ENCODE measurements at regions of chrX and their contacts with region 1.

Region 1: GRCh38 chrX:41180194-41180908 is 95.1 kb downstream of the USP9X start:
- DNase-seq: peak; percentile 32 to 65 (median 56)
- H3K4me3 ChIP-seq: no peak overlapping the region
- H3K27ac ChIP-seq: no peak overlapping the region
- H3K4me1 ChIP-seq: no peaks in the 10 kb centered on the region
- H3K27me3 ChIP-seq: no peaks in the 10 kb centered on the region
- CTCF ChIP-seq: peak; percentile 36 to 55 (median 50)
- EP300 ChIP-seq: no peak
- POLR2A ChIP-seq: no peak

Region 2: GRCh38 chrX:39288592-39288991 is 1891.8 kb before region 1 on chrX:
- intact Hi-C with region 1: loop called in 1 of 4 experiments (anchors 5 kb)
- DNase-seq: no peak
- H3K4me3 ChIP-seq: no peak overlapping the region
- H3K27ac ChIP-seq: no peak overlapping the region
- H3K4me1 ChIP-seq: no peaks in the 10 kb centered on the region
- H3K27me3 ChIP-seq: no peaks in the 10 kb centered on the region
- CTCF ChIP-seq: no peak
- EP300 ChIP-seq: no peak
- POLR2A ChIP-seq: no peak

Region 3: GRCh38 chrX:41064028-41064427 is 116.3 kb before region 1 on chrX:
- intact Hi-C with region 1: no loop called
- DNase-seq: no peak
- H3K4me3 ChIP-seq: no peak overlapping the region
- H3K27ac ChIP-seq: no peak overlapping the region
- H3K4me1 ChIP-seq: no peaks in the 10 kb centered on the region
- H3K27me3 ChIP-seq: no peaks in the 10 kb centered on the region
- CTCF ChIP-seq: no peak
- EP300 ChIP-seq: no peak
- POLR2A ChIP-seq: no peak

Region 4: DNA sequence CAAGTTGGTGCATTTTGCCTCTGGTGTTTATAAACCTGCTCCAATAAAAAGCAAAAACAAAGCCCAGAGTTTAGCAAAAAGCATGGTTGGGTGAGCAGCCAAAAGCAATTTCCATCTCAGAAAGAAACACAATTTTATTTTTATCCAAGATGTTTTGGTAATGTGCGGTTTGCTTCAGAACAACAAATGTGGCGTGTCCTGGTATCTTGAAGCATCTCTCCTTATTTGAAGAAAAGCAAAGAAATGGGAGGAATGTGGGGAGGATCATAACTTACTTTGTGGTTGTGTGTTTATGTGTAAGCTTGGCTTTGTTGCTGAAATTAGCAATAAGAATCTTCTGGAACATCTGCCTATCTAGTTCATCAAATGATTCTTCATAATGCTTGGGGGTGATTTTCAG is 65.3 kb after region 1 on chrX:
- intact Hi-C with region 1: loop called in 3 of 4 experiments (anchors 5 to 10 kb)
- DNase-seq: no peak
- H3K4me3 ChIP-seq: no peak overlapping the region
- H3K27ac ChIP-seq: peak overlapping the region in 1 of 2 donors; percentile 31
- H3K4me1 ChIP-seq: peaks cover 1% of the 10 kb centered on the region
- H3K27me3 ChIP-seq: no peaks in the 10 kb centered on the region
- CTCF ChIP-seq: no peak
- EP300 ChIP-seq: no peak
- POLR2A ChIP-seq: no peak

Region 5: GRCh38 chrX:41250867-41251266 is 70.5 kb after region 1 on chrX:
- intact Hi-C with region 1: loop called in 3 of 4 experiments (anchors 5 to 10 kb)
- DNase-seq: peak in 1 of 5 donors; percentile 12
- H3K4me3 ChIP-seq: no peak overlapping the region
- H3K27ac ChIP-seq: no peak overlapping the region
- H3K4me1 ChIP-seq: peaks cover 6% of the 10 kb centered on the region
- H3K27me3 ChIP-seq: no peaks in the 10 kb centered on the region
- CTCF ChIP-seq: no peak
- EP300 ChIP-seq: no peak
- POLR2A ChIP-seq: no peak

Region 6: DNA sequence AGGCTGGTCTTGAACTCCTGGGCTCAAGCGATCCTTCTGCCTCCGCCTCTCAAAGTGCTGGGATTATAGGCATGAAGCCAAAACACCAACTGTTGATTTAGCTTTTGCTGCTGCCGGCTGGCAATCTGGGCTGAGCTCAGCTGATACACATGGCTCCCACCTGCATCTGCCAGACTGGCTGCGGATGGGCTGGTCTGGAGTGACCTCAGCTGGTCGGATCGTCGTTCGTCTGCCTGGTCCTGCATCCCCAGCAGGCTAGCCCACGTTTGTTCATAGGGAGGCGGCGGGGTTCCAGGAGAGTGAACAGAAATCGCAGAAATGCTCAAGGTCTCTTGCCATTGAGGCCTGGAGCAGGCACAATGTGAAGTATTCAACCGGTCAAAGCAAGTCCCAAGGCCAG is 79.2 kb after region 1 on chrX:
- intact Hi-C with region 1: loop called in 2 of 4 experiments (anchors 5 to 10 kb)
- DNase-seq: peak in 1 of 5 donors; percentile 47
- H3K4me3 ChIP-seq: no peak overlapping the region
- H3K27ac ChIP-seq: no peak overlapping the region
- H3K4me1 ChIP-seq: no peaks in the 10 kb centered on the region
- H3K27me3 ChIP-seq: no peaks in the 10 kb centered on the region
- CTCF ChIP-seq: no peak
- EP300 ChIP-seq: no peak
- POLR2A ChIP-seq: no peak

Region 7: GRCh38 chrX:41273638-41274037 is 93.3 kb after region 1 on chrX:
- intact Hi-C with region 1: no loop called
- DNase-seq: no peak
- H3K4me3 ChIP-seq: no peak overlapping the region
- H3K27ac ChIP-seq: no peak overlapping the region
- H3K4me1 ChIP-seq: peaks cover 4% of the 10 kb centered on the region
- H3K27me3 ChIP-seq: no peaks in the 10 kb centered on the region
- CTCF ChIP-seq: no peak
- EP300 ChIP-seq: no peak
- POLR2A ChIP-seq: no peak

Measured in ovary (tissue), 10 donors.